Endothelial cell of umbilical vein (primary cell): ENCODE measurements at regions of chr19 and their contacts with region 1.

Region 1: DNA sequence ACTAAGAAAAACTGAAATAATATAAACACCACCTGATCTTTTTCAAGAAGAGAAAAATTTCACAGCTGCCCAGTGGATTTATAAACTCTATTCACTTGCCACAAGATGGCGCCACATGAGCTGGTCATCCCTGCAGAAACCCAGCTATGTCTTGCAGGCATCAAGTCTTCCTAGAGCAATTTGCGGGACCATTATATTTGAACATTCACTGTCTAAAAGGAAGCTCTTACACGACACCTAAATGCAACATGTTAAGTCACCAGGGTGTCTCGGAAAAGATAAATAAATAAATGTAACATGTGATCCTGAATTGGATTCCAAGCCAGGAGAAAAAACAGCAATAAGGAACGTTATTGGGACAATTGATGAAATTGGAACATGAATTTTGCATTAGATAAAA is 20.3 kb upstream of the AKT2 start:
- DNase-seq: peak; percentile 82
- H3K4me3 ChIP-seq: no peak overlapping the region
- H3K27ac ChIP-seq: no peak overlapping the region
- H3K4me1 ChIP-seq: no peaks in the 10 kb centered on the region
- H3K27me3 ChIP-seq: no peaks in the 10 kb centered on the region
- CTCF ChIP-seq: peak; percentile 66 to 68
- POLR2A ChIP-seq: no peak

Region 2: DNA sequence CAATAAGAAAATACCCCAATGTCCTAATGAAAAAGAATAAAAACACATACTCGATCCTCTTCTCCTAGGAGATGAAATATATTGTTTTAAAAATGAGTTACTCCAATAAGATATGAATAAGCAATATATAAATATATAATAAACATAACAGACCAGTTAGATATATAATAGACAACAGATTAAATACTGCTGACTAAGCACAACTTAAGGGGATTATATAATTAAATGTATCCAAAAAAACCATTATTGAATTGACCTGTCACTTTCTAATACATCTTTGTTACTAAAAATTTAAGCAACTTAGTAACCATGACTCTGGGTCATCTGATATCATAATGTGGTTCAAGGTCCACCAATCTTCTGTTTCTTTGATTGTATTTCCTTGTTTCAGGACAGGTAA is 235.3 kb before region 1 on chr19:
- CTCF ChIA-PET with region 1: no interaction called
- POLR2A ChIA-PET with region 1: no interaction called
- dilution Hi-C with region 1: no loop called
- intact Hi-C with region 1: no loop called
- DNase-seq: no peak
- H3K4me3 ChIP-seq: no peak overlapping the region
- H3K27ac ChIP-seq: no peak overlapping the region
- H3K4me1 ChIP-seq: no peaks in the 10 kb centered on the region
- H3K27me3 ChIP-seq: no peaks in the 10 kb centered on the region
- CTCF ChIP-seq: no peak
- POLR2A ChIP-seq: no peak

Region 3: GRCh38 chr19:40139533-40140287 is 165.7 kb before region 1 on chr19:
- CTCF ChIA-PET with region 1: interaction called, 26 read pairs
- POLR2A ChIA-PET with region 1: no interaction called
- dilution Hi-C with region 1: no loop called
- intact Hi-C with region 1: loop called (anchors 1 kb)
- DNase-seq: peak; percentile 50
- H3K4me3 ChIP-seq: no peak overlapping the region
- H3K27ac ChIP-seq: no peak overlapping the region
- H3K4me1 ChIP-seq: no peaks in the 10 kb centered on the region
- H3K27me3 ChIP-seq: peaks cover 2 to 6% of the 10 kb centered on the region in 2 experiments
- CTCF ChIP-seq: peak; percentile 46 to 56
- POLR2A ChIP-seq: no peak

Region 4: DNA sequence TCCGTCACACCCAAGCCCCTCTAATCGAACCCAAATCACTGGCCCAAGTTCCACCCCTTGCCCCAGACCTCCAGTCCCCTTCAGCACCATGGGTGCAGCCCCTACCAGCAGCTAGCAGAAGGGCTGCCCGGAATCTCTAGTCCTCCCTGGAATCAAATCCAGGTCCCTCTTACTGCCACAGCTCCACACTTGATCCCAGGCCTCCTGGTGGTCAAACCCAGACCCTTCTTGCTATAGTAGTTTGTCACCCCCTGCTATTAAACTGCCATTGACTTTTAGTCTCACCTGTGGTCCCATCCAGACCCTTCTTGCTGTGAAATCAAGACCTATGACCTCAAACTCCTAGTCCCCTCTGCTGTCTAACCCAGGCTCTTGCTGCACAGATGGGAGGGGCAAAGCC is 75.9 kb after region 1 on chr19:
- CTCF ChIA-PET with region 1: interaction called, 13 read pairs
- POLR2A ChIA-PET with region 1: no interaction called
- dilution Hi-C with region 1: no loop called
- intact Hi-C with region 1: no loop called
- DNase-seq: no peak
- H3K4me3 ChIP-seq: no peak overlapping the region
- H3K27ac ChIP-seq: no peak overlapping the region
- H3K4me1 ChIP-seq: no peaks in the 10 kb centered on the region
- H3K27me3 ChIP-seq: no peaks in the 10 kb centered on the region
- CTCF ChIP-seq: peak in 1 of 2 donors; percentile 22
- POLR2A ChIP-seq: no peak

Region 5: GRCh38 chr19:40465557-40466150 is 160.3 kb after region 1 on chr19 and contains the start of gene BLVRB:
- CTCF ChIA-PET with region 1: interaction called, 21 read pairs
- POLR2A ChIA-PET with region 1: no interaction called
- dilution Hi-C with region 1: no loop called
- intact Hi-C with region 1: loop called (anchors 1 kb)
- DNase-seq: peak; percentile 100
- H3K4me3 ChIP-seq: peak within 1 kb of the TSS; percentile 14 to 69 (median 49)
- H3K27ac ChIP-seq: peak within 1 kb of the TSS; percentile 47
- H3K4me1 ChIP-seq: peaks cover 14% of the 10 kb centered on the region
- H3K27me3 ChIP-seq: peaks cover 2 to 5% of the 10 kb centered on the region in 2 experiments
- CTCF ChIP-seq: no peak
- POLR2A ChIP-seq: no peak
- total RNA-seq, gene BLVRB: 30.8 and 35.8 TPM in 2 replicates

Region 6: GRCh38 chr19:40542202-40542859 is 236.9 kb after region 1 on chr19:
- CTCF ChIA-PET with region 1: interaction called, 13 read pairs
- POLR2A ChIA-PET with region 1: no interaction called
- dilution Hi-C with region 1: no loop called
- intact Hi-C with region 1: no loop called
- DNase-seq: no peak
- H3K4me3 ChIP-seq: no peak overlapping the region
- H3K27ac ChIP-seq: no peak overlapping the region
- H3K4me1 ChIP-seq: no peaks in the 10 kb centered on the region
- H3K27me3 ChIP-seq: no peaks in the 10 kb centered on the region
- CTCF ChIP-seq: no peak
- POLR2A ChIP-seq: no peak

Region 7: DNA sequence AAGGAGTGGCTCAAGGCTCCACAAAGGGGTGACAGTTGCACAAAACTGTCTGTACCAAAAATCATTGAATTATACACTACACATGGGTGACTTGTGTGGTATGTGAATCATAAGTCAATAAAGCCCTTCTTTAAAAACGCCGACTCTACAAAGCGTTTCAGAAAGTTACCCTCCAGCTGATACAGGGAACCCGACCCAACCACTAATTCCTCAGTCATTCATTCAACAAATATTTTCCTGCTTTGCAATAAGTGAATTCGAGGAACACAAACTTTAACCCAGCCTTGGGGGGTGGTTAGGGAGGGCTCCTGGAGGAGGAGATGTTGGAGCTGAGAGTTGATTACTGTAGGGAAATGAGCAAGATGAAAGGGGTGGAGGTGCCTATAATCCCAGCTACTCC is 327.8 kb after region 1 on chr19:
- CTCF ChIA-PET with region 1: interaction called, 35 read pairs
- POLR2A ChIA-PET with region 1: no interaction called
- dilution Hi-C with region 1: no loop called
- intact Hi-C with region 1: loop called (anchors 1 kb)
- DNase-seq: no peak
- H3K4me3 ChIP-seq: no peak overlapping the region
- H3K27ac ChIP-seq: no peak overlapping the region
- H3K4me1 ChIP-seq: no peaks in the 10 kb centered on the region
- H3K27me3 ChIP-seq: peaks cover 0 to 4% of the 10 kb centered on the region in 2 experiments
- CTCF ChIP-seq: no peak
- POLR2A ChIP-seq: no peak

Region 8: GRCh38 chr19:40889366-40889765 is 584.0 kb after region 1 on chr19:
- CTCF ChIA-PET with region 1: no interaction called
- POLR2A ChIA-PET with region 1: no interaction called
- dilution Hi-C with region 1: no loop called
- intact Hi-C with region 1: no loop called
- DNase-seq: no peak
- H3K4me3 ChIP-seq: no peak overlapping the region
- H3K27ac ChIP-seq: no peak overlapping the region
- H3K4me1 ChIP-seq: no peaks in the 10 kb centered on the region
- H3K27me3 ChIP-seq: peaks cover 0 to 2% of the 10 kb centered on the region in 2 experiments
- CTCF ChIP-seq: no peak
- POLR2A ChIP-seq: no peak